Esophagus muscularis mucosa (tissue), 4 donors: ENCODE measurements at regions of chr1 and their contacts with region 1.

Region 1: DNA sequence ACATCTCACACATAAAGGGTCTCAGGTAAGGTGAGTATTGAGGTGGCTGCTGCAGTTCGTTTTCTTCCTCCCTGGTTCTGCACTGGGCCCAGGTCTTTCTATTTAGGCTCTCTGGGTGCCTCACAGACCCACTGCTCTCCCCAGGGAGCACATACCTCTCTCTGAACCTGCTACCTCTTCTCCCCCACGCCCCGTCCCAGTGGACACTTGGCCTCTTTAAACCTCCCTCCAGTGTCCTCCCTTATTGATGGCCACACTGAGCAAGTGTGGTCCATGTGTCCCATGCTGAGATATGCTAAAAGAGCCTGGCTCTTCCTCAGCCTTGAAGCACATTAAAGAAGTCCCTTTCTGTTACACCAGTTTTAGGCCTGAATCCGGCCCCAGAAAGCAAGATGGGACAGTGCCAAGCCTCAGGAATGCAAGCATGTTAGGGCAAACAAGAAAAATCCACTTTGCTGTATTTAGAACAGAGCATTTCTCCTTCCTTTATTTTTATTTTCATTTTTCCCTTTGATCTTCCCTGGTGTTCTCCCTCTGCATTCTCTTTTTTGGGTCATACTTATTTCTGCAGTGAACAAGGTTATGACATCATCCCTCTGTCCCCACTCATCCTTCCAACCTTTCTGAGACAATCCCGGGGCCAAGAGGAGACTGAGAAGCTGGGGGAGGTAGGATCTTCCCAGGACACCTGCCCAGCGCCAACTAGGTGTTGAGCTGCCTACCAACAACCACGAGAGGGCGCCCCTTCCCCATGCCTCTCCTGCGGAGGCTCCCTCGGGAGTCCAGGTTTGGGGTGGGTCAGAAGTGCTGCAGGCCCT is 5.0 kb upstream of the CHI3L2 start:
- DNase-seq: no peak
- H3K4me3 ChIP-seq: no peak overlapping the region
- H3K27ac ChIP-seq: no peak overlapping the region
- H3K4me1 ChIP-seq: peaks cover 0 to 13% (median 11%) of the 10 kb centered on the region in 4 donors
- H3K27me3 ChIP-seq: peaks cover 0 to 6% (median 0%) of the 10 kb centered on the region in 4 donors
- CTCF ChIP-seq: peak; percentile 81 to 93 (median 91)
- EP300 ChIP-seq: no peak
- POLR2A ChIP-seq: no peak

Region 2: DNA sequence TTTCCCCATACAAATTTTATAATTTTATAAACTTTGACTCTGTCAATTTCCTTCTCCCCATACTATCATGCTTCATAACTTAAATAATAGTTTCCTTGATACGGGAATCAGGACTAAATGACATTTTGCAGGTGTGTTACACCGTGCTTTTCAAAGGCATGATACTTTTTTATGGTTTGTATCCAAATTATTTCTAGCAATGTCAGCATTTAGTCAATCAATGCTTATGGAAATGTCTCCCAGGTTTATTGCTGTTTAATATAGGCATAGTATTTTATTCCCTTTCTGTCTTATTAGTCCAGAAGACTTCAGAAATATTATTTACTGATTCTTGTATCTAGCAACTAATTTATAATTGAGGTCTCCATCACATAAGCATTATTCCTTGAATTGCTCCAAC is 106.0 kb before region 1 on chr1:
- intact Hi-C with region 1: no loop called
- DNase-seq: no peak
- H3K4me3 ChIP-seq: no peak overlapping the region
- H3K27ac ChIP-seq: no peak overlapping the region
- H3K4me1 ChIP-seq: no peaks in the 10 kb centered on the region
- H3K27me3 ChIP-seq: no peaks in the 10 kb centered on the region
- CTCF ChIP-seq: no peak
- EP300 ChIP-seq: no peak
- POLR2A ChIP-seq: no peak

Region 3: DNA sequence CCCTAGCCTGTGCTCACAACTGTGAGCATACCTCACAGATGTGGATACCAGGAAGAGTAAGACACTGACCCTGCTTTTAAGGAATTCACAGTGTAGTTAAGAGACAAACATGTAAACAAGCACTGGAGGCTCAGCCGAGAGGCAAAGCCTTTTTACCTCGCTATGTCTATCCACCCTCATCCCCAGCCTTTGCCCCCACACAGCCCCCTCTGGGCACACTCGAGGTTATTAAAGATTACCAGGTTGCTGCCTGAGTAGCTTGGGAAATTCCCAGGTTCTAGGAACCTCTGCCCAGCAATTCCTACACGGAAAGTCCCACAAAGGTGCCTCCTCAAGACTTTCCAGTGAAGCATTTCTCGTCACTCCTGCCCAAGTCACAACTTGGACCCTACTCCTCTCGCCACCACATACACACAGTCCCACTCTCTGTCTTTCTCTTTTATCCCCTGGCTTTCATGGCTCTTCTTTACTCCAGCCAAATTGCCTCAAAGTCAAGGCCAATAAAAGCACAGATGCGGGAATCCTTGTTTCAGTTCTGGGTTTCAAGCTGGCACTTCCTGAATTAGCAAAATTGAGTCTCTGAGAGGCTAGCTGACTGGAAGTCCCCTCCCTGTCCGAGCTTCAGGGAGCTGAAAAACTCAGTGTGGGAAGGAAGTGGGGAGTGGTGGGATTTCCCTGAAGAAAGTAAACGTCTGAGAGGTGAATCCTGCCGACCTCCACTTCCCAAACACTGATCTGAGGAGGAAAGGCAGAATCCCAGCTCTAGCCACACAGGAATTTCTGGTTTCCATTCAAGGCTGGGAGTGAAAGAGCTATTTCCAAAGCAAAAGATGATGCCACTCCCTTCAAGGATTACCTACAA is 29.6 kb before region 1 on chr1:
- intact Hi-C with region 1: no loop called
- DNase-seq: no peak
- H3K4me3 ChIP-seq: no peak overlapping the region
- H3K27ac ChIP-seq: peak overlapping the region; percentile 9 to 37 (median 26)
- H3K4me1 ChIP-seq: peaks cover 0 to 34% (median 25%) of the 10 kb centered on the region in 4 donors
- H3K27me3 ChIP-seq: no peaks in the 10 kb centered on the region
- CTCF ChIP-seq: no peak
- EP300 ChIP-seq: no peak
- POLR2A ChIP-seq: no peak

Region 4: GRCh38 chr1:111399792-111400610 is 177.5 kb after region 1 on chr1:
- intact Hi-C with region 1: loop called (anchors 2 kb)
- DNase-seq: no peak
- H3K4me3 ChIP-seq: no peak overlapping the region
- H3K27ac ChIP-seq: no peak overlapping the region
- H3K4me1 ChIP-seq: peaks cover 0 to 3% (median 0%) of the 10 kb centered on the region in 4 donors
- H3K27me3 ChIP-seq: peaks cover 0 to 26% (median 0%) of the 10 kb centered on the region in 4 donors
- CTCF ChIP-seq: peak; percentile 68 to 76 (median 71)
- EP300 ChIP-seq: no peak
- POLR2A ChIP-seq: no peak

Region 5: GRCh38 chr1:111769517-111770146 is 547.1 kb after region 1 on chr1:
- intact Hi-C with region 1: loop called (anchors 10 kb)
- DNase-seq: no peak
- H3K4me3 ChIP-seq: no peak overlapping the region
- H3K27ac ChIP-seq: peak overlapping the region in 2 of 4 donors; percentile 7 to 9
- H3K4me1 ChIP-seq: peaks cover 0 to 24% (median 22%) of the 10 kb centered on the region in 4 donors
- H3K27me3 ChIP-seq: no peaks in the 10 kb centered on the region
- CTCF ChIP-seq: peak; percentile 78 to 85 (median 78)
- EP300 ChIP-seq: no peak
- POLR2A ChIP-seq: no peak